PC-3 (cell line): ENCODE measurements at regions of chr7 and their contacts with region 1.

Region 1: DNA sequence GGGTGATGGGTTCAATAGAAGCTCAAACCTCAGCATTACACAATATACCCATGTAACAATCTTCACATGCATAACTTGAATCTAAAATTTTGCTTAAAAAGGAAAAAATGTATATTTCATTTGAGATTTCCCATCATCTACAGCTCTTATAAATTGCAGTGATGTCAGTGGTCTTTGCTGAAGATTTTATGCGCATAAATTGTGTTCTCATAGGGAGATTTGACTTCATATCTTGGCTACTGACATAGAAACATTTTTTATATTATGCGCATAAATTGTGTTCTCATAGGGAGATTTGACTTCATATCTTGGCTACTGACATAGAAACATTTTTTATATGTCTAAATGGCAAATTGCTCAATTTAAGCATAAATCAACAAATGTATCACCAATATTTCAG is 1125.3 kb upstream of the C7orf33 start:
- DNase-seq: no peak
- ATAC-seq: no peak
- H3K4me3 ChIP-seq: no peak overlapping the region
- H3K27ac ChIP-seq: no peak overlapping the region
- H3K4me1 ChIP-seq: peaks cover 8% of the 10 kb centered on the region; the same call in 1 of the 2 replicates
- H3K27me3 ChIP-seq: no peaks in the 10 kb centered on the region
- CTCF ChIP-seq: no peak

Region 2: DNA sequence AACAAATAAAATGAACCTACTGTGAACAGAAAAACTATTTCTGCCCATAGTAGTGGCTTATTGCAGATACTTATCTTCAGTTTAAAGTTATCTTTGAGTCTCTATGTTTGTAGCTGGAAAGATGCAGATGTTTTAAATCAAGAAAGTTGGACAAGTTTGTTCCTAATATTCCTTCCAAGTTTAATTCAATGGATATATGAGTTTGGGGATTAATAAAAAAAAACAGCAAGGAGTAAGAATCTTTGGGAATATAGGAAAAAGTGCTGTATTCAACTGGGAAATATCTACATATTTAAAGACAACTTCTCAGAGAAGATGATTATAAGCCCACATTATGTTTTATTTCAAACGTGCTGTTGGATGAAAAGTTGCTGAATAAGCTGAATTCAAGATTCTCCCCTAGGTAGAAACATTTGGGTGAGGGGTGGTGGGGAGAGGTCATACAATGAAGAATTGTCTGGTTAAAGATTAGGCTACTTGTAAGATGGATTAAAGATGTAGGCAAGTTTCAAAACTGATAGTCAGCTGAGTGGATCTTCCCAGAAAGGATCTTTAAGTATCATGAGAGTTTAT is 213.4 kb before region 1 on chr7:
- CTCF ChIA-PET with region 1: no interaction called
- POLR2A ChIA-PET with region 1: no interaction called
- intact Hi-C with region 1: no loop called
- DNase-seq: no peak
- ATAC-seq: no peak
- H3K4me3 ChIP-seq: no peak overlapping the region
- H3K27ac ChIP-seq: no peak overlapping the region
- H3K4me1 ChIP-seq: no peaks in the 10 kb centered on the region
- H3K27me3 ChIP-seq: no peaks in the 10 kb centered on the region
- CTCF ChIP-seq: no peak

Region 3: DNA sequence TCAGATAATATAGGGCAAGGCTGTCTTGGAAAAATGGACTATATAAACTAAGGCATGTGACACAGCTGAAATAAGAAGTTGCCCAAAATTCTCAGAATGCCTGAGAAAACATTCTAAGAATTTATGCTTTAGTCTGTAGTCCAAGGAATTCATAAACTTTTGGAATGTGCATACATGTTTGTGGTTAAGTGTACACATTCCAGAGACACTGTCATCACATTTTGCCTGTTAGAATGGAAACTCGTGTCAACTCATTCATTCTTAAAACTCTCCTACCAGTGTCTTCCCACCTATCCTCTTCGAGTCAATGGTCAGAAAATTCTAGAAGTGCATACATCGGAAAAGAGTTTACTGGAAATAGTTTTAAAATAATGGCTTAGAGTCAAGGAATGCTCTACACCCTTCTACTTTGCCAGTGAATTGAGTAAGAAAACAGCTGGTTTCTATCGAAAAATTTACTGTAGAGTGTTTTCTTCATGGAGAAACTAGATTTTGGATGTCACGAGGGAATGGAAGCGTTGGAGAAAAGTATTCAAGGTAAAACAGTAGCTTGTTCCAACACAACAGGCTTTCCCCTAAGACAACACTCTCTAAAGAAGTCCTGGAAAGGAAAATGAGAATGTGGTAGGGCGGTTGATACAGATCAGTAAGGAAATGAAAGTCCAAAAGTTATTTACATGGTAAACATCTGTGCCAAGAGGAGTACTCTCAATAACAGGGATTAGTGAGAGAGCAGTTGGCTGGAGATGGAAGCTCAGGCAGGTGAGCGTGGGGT is 52.3 kb before region 1 on chr7:
- CTCF ChIA-PET with region 1: no interaction called
- POLR2A ChIA-PET with region 1: no interaction called
- intact Hi-C with region 1: no loop called
- DNase-seq: peak; percentile 89
- ATAC-seq: peak; percentile 89
- H3K4me3 ChIP-seq: peak overlapping the region; percentile 44
- H3K27ac ChIP-seq: peak overlapping the region; percentile 64
- H3K4me1 ChIP-seq: peaks cover 37% of the 10 kb centered on the region
- H3K27me3 ChIP-seq: no peaks in the 10 kb centered on the region
- CTCF ChIP-seq: no peak

Region 4: DNA sequence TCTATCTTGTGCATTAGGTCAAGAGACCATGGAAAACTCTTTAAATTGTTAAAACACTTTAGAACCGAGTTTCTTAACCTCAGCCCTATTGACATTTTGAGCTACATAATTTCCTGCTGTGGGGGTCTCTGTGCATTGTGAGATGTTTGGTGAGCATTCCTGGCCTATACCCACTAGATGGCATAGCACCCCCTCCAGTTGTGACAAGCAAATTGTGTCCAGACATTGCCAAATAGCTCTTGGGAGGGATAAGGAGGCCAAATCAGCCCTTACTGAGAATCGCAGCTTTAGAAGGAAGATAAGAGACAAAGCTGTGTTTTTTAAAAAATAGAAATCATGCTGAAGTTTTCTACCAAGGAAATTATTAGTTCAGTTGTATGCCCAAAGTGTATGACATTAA is 33.1 kb before region 1 on chr7:
- CTCF ChIA-PET with region 1: no interaction called
- POLR2A ChIA-PET with region 1: no interaction called
- intact Hi-C with region 1: no loop called
- DNase-seq: peak; percentile 56
- ATAC-seq: peak; percentile 26; the same call in 1 of the 2 replicates
- H3K4me3 ChIP-seq: no peak overlapping the region
- H3K27ac ChIP-seq: no peak overlapping the region
- H3K4me1 ChIP-seq: peaks cover 17% of the 10 kb centered on the region
- H3K27me3 ChIP-seq: no peaks in the 10 kb centered on the region
- CTCF ChIP-seq: peak; percentile 74

Region 5: DNA sequence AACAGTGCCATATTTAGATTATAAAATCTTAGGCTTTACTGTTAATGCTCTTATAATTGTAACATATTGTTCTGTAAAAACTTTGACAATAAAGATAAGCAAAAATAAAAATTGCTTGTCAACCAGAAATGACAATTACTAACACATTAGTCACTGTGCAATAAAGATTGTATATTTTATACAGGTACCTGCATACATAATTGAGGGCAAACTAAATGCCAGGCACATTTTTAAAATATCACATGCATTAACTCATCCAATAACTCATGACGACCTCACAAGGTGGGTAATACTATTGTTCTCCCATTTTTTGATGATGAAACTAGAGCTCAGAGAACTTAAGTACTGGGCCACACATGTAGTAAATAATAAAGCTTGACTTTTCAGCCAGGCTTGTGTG is 105.2 kb after region 1 on chr7:
- CTCF ChIA-PET with region 1: no interaction called
- POLR2A ChIA-PET with region 1: no interaction called
- intact Hi-C with region 1: loop called (anchors 1 kb)
- DNase-seq: peak; percentile 96
- ATAC-seq: peak; percentile 73
- H3K4me3 ChIP-seq: 0 out of 2 replicates have a peak overlapping the region, but pooled peaks have one; percentile 5
- H3K27ac ChIP-seq: peak overlapping the region; percentile 87
- H3K4me1 ChIP-seq: peaks cover 37% of the 10 kb centered on the region
- H3K27me3 ChIP-seq: no peaks in the 10 kb centered on the region
- CTCF ChIP-seq: no peak